ENCODE measurements at regions of chr11 and their contacts with region 1.

Region 1: GRCh38 chr11:14249121-14249963 is 109.6 kb downstream of the RRAS2 start:
- DNase-seq: peak; percentile 27 to 83 (median 62)
- ATAC-seq: peak; percentile 57 to 68 (median 65)
- H3K4me3 ChIP-seq: peak overlapping the region in 1 of 2 donors; percentile 42
- H3K4me3 Mint-ChIP-seq: peak overlapping the region; percentile 22 to 79 (median 46)
- H3K27ac ChIP-seq: no peak overlapping the region
- H3K27ac Mint-ChIP-seq: peak overlapping the region in 1 of 2 donors; percentile 58
- H3K4me1 ChIP-seq: peaks cover 12 to 17% of the 10 kb centered on the region in 2 experiments
- H3K4me1 Mint-ChIP-seq: peaks cover 21 to 26% (median 24%) of the 10 kb centered on the region in 3 donors
- H3K27me3 ChIP-seq: no peaks in the 10 kb centered on the region
- H3K27me3 Mint-ChIP-seq: no peaks in the 10 kb centered on the region

Region 2: GRCh38 chr11:13772223-13773046 is 476.9 kb before region 1 on chr11:
- CTCF ChIA-PET with region 1: interaction called, 21 to 32 read pairs
- POLR2A ChIA-PET with region 1: no interaction called
- DNase-seq: peak in 21 of 35 experiments; percentile 1 to 87 (median 22)
- ATAC-seq: peak; percentile 69 to 82 (median 72)
- H3K4me3 ChIP-seq: no peak overlapping the region
- H3K4me3 Mint-ChIP-seq: no peak overlapping the region
- H3K27ac ChIP-seq: no peak overlapping the region
- H3K27ac Mint-ChIP-seq: no peak overlapping the region
- H3K4me1 ChIP-seq: no peaks in the 10 kb centered on the region
- H3K4me1 Mint-ChIP-seq: peaks cover 7 to 11% (median 10%) of the 10 kb centered on the region in 3 donors
- H3K27me3 ChIP-seq: no peaks in the 10 kb centered on the region
- H3K27me3 Mint-ChIP-seq: peaks cover 3% of the 10 kb centered on the region in 2 donors

Region 3: GRCh38 chr11:13955971-13956421 is 293.3 kb before region 1 on chr11:
- CTCF ChIA-PET with region 1: interaction called, 3 to 15 read pairs
- POLR2A ChIA-PET with region 1: no interaction called
- DNase-seq: peak in 34 of 35 experiments; percentile 25 to 90 (median 49)
- ATAC-seq: peak; percentile 57 to 81 (median 72)
- H3K4me3 ChIP-seq: no peak overlapping the region
- H3K4me3 Mint-ChIP-seq: no peak overlapping the region
- H3K27ac ChIP-seq: no peak overlapping the region
- H3K27ac Mint-ChIP-seq: no peak overlapping the region
- H3K4me1 ChIP-seq: peaks cover 0 to 3% of the 10 kb centered on the region in 2 experiments
- H3K4me1 Mint-ChIP-seq: peaks cover 0 to 5% (median 3%) of the 10 kb centered on the region in 3 donors
- H3K27me3 ChIP-seq: peaks cover 0 to 4% of the 10 kb centered on the region in 2 experiments
- H3K27me3 Mint-ChIP-seq: peaks cover 14 to 16% of the 10 kb centered on the region in 2 donors

Region 4: DNA sequence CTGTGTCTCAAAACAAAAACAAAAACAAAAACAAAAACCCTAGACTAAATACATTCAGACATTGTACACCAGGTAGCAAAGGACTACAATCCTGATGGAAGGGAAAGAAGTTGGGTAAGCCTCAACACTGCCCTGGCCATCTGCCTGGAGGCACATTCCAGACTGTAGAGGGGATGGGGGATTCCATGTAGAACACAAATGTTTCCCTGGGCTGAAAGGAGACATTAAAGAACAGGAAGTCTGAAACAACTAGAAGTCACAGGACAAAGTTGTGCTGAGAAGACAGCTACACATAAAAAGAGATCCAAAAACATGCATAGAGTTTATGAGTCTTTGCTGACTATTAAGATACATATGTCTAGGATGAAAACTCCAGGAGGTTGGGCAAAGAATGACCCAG is 25.7 kb after region 1 on chr11:
- CTCF ChIA-PET with region 1: no interaction called
- POLR2A ChIA-PET with region 1: no interaction called
- DNase-seq: no peak
- ATAC-seq: no peak
- H3K4me3 ChIP-seq: no peak overlapping the region
- H3K4me3 Mint-ChIP-seq: no peak overlapping the region
- H3K27ac ChIP-seq: no peak overlapping the region
- H3K27ac Mint-ChIP-seq: no peak overlapping the region
- H3K4me1 ChIP-seq: peaks cover 11 to 16% of the 10 kb centered on the region in 2 experiments
- H3K4me1 Mint-ChIP-seq: peaks cover 23 to 34% (median 23%) of the 10 kb centered on the region in 3 donors
- H3K27me3 ChIP-seq: no peaks in the 10 kb centered on the region
- H3K27me3 Mint-ChIP-seq: no peaks in the 10 kb centered on the region